Activated CD8-positive, alpha-beta T cell treated with anti-CD3 and anti-CD28 coated beads for 36 hours (primary cell): ENCODE measurements at regions of chr1 and their contacts with region 1.

Region 1: DNA sequence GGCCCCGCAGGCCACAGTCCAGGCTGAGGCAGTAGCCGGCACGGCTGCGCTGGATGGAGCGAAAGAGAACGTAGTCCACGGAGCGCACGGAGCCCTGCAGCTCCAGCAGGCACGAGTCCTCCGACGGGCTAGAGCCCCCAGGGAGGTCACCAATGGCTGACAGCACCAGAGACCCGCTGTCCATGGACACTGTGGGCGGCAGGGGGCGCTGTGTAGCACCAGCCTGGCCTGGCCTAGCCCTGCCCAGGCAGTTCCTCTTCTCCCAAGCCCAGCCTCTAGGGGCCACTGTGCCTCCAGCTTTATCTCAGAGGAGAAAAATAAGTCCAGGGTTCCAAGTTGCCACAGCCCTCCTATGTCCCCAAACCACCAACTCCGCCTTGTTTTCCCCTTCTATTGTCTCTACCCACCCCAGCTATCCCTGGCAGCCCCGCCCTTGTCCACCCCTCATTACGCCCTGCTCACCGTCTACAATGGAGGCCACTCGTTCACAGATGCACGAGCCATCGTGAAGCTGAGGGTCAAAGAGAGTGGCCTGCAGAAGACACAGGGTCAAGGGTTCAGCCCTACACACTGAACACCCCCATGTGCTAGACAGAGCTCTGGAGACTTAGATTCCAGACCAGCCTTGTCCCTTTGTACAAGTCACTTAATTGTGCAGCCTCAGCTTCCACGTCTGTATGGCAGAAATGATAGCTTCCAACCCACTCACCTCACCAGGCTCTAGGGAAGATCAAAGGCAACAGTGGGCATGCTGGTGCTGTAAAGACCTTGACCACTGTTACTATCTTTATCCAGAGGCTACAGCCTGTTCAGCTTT is 4.4 kb downstream of the ENTREP3 start:
- DNase-seq: peak; percentile 98
- ATAC-seq: peak; percentile 95
- H3K4me3 Mint-ChIP-seq: peak overlapping the region; percentile 60
- H3K27ac Mint-ChIP-seq: peak overlapping the region; percentile 62
- H3K4me1 Mint-ChIP-seq: peaks cover 30% of the 10 kb centered on the region
- H3K27me3 Mint-ChIP-seq: no peaks in the 10 kb centered on the region
- CTCF ChIP-seq: peak; percentile 99

Region 2: DNA sequence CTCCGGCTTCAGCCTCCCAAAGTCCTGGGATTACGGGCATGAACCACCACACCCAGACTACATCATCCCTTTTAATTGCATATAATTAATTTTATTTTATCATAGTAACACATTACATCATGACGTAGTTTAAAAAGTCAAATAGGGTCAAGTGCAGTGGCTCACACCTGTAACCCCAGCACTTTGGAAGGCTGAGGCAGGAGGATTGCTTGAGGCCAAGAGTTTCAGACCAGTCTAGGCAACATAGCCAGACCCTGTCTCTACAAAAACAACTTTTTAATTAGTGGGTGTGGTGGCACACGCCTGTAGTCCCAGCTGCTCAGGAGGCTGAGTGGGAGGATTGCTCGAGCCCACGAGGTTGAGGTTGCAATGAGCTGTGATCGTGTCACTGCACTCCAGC is 151.5 kb before region 1 on chr1:
- CTCF ChIA-PET with region 1: no interaction called
- POLR2A ChIA-PET with region 1: no interaction called
- intact Hi-C with region 1: no loop called
- DNase-seq: no peak
- ATAC-seq: no peak
- H3K4me3 Mint-ChIP-seq: no peak overlapping the region
- H3K27ac Mint-ChIP-seq: no peak overlapping the region
- H3K4me1 Mint-ChIP-seq: no peaks in the 10 kb centered on the region
- H3K27me3 Mint-ChIP-seq: peaks cover 12% of the 10 kb centered on the region
- CTCF ChIP-seq: no peak

Region 3: DNA sequence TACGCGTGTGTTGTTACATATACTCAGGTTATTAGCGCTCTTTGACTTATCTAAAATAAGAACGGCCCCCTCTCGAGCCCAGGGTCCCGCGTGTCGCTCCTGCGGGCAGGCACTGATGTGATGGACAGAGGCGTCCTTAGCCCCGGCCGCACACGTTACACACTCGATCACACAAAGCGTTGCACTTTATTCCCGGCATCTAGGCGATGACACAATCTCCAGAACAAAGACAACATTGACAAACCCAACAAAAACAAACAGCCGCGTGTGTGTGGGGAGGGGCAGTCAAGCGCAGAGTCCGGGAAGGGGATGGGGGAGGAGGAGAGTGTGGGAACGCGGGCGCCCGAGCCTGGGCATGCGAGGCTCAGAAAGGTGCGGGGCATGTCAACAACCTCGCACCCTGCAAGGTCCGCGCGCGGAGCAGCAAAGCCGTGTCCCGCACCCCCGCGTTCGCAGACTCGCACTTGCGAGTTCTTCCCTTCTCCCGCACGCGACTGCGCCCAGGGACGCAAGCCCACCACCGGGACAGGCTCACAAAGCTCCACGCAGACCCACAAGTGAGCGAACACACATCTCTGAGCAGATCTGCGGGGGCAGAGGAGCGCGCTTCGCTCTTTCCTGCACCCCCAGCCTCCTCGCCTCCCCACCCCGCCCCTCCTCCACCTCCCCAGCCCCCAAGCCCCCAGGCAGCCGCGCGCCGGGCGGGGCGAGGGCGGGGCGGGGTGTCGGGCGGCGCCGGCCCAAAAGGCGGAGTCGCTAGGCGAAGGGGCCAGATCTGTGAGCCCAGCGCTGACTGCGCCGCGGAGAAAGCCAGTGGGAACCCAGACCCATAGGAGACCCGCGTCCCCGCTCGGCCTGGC is 123.5 kb before region 1 on chr1 and contains the start of gene EFNA1:
- CTCF ChIA-PET with region 1: no interaction called
- POLR2A ChIA-PET with region 1: no interaction called
- intact Hi-C with region 1: no loop called
- DNase-seq: peak; percentile 43
- ATAC-seq: peak; percentile 59
- H3K4me3 Mint-ChIP-seq: peak within 1 kb of the TSS; percentile 73
- H3K27ac Mint-ChIP-seq: peak within 1 kb of the TSS; percentile 34
- H3K4me1 Mint-ChIP-seq: peaks cover 34% of the 10 kb centered on the region
- H3K27me3 Mint-ChIP-seq: peaks cover 21% of the 10 kb centered on the region
- CTCF ChIP-seq: no peak
- total RNA-seq, gene EFNA1: 0.59 to 0.60 TPM

Region 4: DNA sequence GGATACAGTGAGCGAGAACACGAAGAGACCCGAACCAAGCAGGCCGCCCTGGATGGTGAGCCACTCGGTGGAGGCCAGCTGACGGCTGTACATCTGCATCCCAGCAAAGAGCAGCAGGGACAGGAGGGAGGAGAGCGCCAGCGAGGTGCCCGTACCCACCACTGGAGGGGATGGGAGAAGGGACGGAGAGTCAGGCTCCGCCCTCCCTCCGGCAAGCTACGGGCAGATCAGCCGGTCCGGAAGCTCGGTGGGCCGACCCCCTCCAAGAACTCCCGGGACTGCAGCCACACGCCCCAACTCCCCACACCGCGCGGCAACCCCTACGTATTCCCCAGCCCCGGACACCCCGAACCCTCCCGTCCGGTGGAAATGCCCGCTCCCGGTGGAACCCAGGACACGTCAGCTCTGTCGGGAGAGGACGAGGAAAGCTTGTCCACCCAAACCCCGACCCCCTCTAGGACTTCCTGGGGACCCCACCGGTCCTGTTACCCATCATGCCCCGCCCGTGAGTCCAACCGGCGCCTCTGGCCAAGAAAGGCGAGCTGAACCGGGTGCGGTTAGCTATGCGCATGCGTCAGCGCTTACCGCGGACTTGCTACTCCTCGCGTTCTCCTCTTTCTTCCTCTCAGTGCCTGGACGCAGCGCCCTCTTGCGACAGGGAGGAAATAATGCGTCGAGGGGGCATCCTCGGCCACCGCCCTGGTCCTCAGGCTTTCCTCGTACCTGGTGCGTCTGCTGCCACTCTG is 77.9 kb before region 1 on chr1 and contains the start of gene KRTCAP2:
- CTCF ChIA-PET with region 1: interaction called, 10 read pairs
- POLR2A ChIA-PET with region 1: interaction called, 3 read pairs
- intact Hi-C with region 1: no loop called
- DNase-seq: peak; percentile 97
- ATAC-seq: peak; percentile 83
- H3K4me3 Mint-ChIP-seq: peak within 1 kb of the TSS; percentile 96
- H3K27ac Mint-ChIP-seq: peak within 1 kb of the TSS; percentile 98
- H3K4me1 Mint-ChIP-seq: peaks cover 45% of the 10 kb centered on the region
- H3K27me3 Mint-ChIP-seq: no peaks in the 10 kb centered on the region
- CTCF ChIP-seq: peak; percentile 91
- total RNA-seq, gene KRTCAP2: 124 to 125 TPM

Region 5: DNA sequence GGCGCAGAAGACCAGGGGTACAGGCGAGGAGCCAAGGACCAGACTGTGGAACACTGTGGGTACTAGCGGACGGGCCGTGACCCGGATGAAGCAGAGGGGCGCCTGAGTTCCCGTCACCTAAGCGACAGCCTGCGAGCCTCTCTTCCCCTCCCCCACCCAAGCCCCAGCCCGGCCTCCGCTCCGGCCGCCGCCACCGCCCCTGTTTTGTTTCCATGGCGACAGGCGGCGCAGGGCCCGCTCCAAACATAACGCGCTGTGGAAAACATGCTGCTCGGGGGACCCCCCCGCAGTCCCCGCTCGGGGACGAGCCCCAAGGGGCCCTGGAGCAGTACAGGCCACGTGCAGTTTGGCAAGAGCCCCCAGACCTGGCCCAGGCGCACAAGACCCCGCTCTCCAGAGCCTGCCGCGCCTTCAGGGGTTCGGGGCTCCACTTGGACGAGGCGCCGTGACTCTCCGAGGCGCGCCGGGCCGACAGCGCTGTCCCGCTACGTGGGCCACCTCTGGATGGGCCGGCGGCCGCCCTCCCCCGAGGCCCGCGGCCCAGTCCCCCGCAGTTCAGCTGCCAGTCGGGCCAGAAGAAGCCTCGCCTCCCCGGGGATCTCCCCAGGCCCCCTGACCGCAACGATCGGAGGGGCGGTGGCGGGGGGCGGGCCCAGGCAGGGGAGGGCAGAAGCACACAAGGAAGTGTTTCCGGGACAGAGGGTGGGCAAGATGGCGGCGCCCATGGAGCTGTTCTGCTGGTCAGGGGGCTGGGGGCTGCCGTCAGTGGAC is 42.1 kb before region 1 on chr1 and contains the start of gene MTX1:
- CTCF ChIA-PET with region 1: interaction called, 47 read pairs
- POLR2A ChIA-PET with region 1: interaction called, 22 read pairs
- intact Hi-C with region 1: no loop called
- DNase-seq: peak; percentile 94
- ATAC-seq: peak; percentile 86
- H3K4me3 Mint-ChIP-seq: peak within 1 kb of the TSS; percentile 92
- H3K27ac Mint-ChIP-seq: peak within 1 kb of the TSS; percentile 89
- H3K4me1 Mint-ChIP-seq: peaks cover 29% of the 10 kb centered on the region
- H3K27me3 Mint-ChIP-seq: no peaks in the 10 kb centered on the region
- CTCF ChIP-seq: no peak
- total RNA-seq, gene MTX1: 59.2 to 61.0 TPM

Region 6: GRCh38 chr1:155267373-155267772 is 16.5 kb after region 1 on chr1:
- CTCF ChIA-PET with region 1: interaction called, 232 read pairs
- POLR2A ChIA-PET with region 1: interaction called, 33 read pairs
- intact Hi-C with region 1: no loop called
- DNase-seq: no peak
- ATAC-seq: no peak
- H3K4me3 Mint-ChIP-seq: no peak overlapping the region
- H3K27ac Mint-ChIP-seq: no peak overlapping the region
- H3K4me1 Mint-ChIP-seq: peaks cover 26% of the 10 kb centered on the region
- H3K27me3 Mint-ChIP-seq: no peaks in the 10 kb centered on the region
- CTCF ChIP-seq: no peak

Region 7: GRCh38 chr1:155323798-155324610 is 73.2 kb after region 1 on chr1:
- CTCF ChIA-PET with region 1: interaction called, 170 read pairs
- POLR2A ChIA-PET with region 1: interaction called, 24 read pairs
- intact Hi-C with region 1: no loop called
- DNase-seq: peak; percentile 95
- ATAC-seq: peak; percentile 78
- H3K4me3 Mint-ChIP-seq: peak overlapping the region; percentile 81
- H3K27ac Mint-ChIP-seq: peak overlapping the region; percentile 75
- H3K4me1 Mint-ChIP-seq: peaks cover 42% of the 10 kb centered on the region
- H3K27me3 Mint-ChIP-seq: no peaks in the 10 kb centered on the region
- CTCF ChIP-seq: no peak

Region 8: GRCh38 chr1:155392898-155393411 is 142.1 kb after region 1 on chr1:
- CTCF ChIA-PET with region 1: no interaction called
- POLR2A ChIA-PET with region 1: no interaction called
- intact Hi-C with region 1: no loop called
- DNase-seq: no peak
- ATAC-seq: no peak
- H3K4me3 Mint-ChIP-seq: no peak overlapping the region
- H3K27ac Mint-ChIP-seq: no peak overlapping the region
- H3K4me1 Mint-ChIP-seq: no peaks in the 10 kb centered on the region
- H3K27me3 Mint-ChIP-seq: no peaks in the 10 kb centered on the region
- CTCF ChIP-seq: no peak

Region 9: GRCh38 chr1:155437405-155437804 is 186.6 kb after region 1 on chr1:
- CTCF ChIA-PET with region 1: interaction called, 10 read pairs
- POLR2A ChIA-PET with region 1: no interaction called
- intact Hi-C with region 1: no loop called
- DNase-seq: no peak
- ATAC-seq: no peak
- H3K4me3 Mint-ChIP-seq: no peak overlapping the region
- H3K27ac Mint-ChIP-seq: no peak overlapping the region
- H3K4me1 Mint-ChIP-seq: peaks cover 4% of the 10 kb centered on the region
- H3K27me3 Mint-ChIP-seq: no peaks in the 10 kb centered on the region
- CTCF ChIP-seq: no peak

Region 10: GRCh38 chr1:155609515-155610256 is 358.8 kb after region 1 on chr1 and contains the start of gene MSTO1:
- CTCF ChIA-PET with region 1: interaction called, 15 read pairs
- POLR2A ChIA-PET with region 1: no interaction called
- intact Hi-C with region 1: no loop called
- DNase-seq: peak; percentile 100
- ATAC-seq: peak; percentile 96
- H3K4me3 Mint-ChIP-seq: peak within 1 kb of the TSS; percentile 88
- H3K27ac Mint-ChIP-seq: peak within 1 kb of the TSS; percentile 94
- H3K4me1 Mint-ChIP-seq: peaks cover 10% of the 10 kb centered on the region
- H3K27me3 Mint-ChIP-seq: no peaks in the 10 kb centered on the region
- CTCF ChIP-seq: no peak
- total RNA-seq, gene MSTO1: 52.3 to 57.1 TPM